Stomach (tissue), 19 donors: ENCODE measurements at regions of chr12 and their contacts with region 1.

Region 1: GRCh38 chr12:94841177-94841576 is 162.3 kb downstream of the NDUFA12 start:
- DNase-seq: peak in 1 of 2 donors; percentile 48
- H3K4me3 ChIP-seq: no peak overlapping the region
- H3K27ac ChIP-seq: no peak overlapping the region
- H3K4me1 ChIP-seq: no peaks in the 10 kb centered on the region
- H3K27me3 ChIP-seq: no peaks in the 10 kb centered on the region
- CTCF ChIP-seq: no peak
- EP300 ChIP-seq: no peak
- POLR2A ChIP-seq: no peak

Region 2: GRCh38 chr12:94909663-94910062 is 68.5 kb after region 1 on chr12:
- intact Hi-C with region 1: loop called (anchors 10 kb)
- DNase-seq: peak in 1 of 2 donors; percentile 33
- H3K4me3 ChIP-seq: no peak overlapping the region
- H3K27ac ChIP-seq: no peak overlapping the region
- H3K4me1 ChIP-seq: no peaks in the 10 kb centered on the region
- H3K27me3 ChIP-seq: no peaks in the 10 kb centered on the region
- CTCF ChIP-seq: no peak
- EP300 ChIP-seq: no peak
- POLR2A ChIP-seq: no peak

Region 3: DNA sequence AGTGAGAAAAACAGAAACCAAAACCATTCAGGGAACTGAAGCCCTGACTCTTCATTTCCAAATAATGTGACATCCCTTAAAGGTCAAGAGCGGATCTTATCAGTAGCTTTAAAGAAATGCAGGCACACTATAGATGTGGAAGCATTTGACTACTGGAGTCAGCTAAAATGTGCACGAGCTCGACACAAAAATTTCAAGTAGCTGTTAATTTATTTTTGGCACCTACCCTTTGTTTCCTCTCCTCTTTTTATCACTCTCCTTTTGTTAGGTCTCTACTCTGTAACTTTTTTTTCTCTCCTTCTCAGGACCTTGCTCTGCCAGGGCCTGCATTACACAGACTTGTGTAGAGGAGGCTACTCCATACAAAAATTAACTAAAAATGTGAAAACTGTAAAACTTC is 317.7 kb after region 1 on chr12:
- intact Hi-C with region 1: no loop called
- DNase-seq: no peak
- H3K4me3 ChIP-seq: no peak overlapping the region
- H3K27ac ChIP-seq: no peak overlapping the region
- H3K4me1 ChIP-seq: peaks cover 0 to 14% (median 6%) of the 10 kb centered on the region in 4 donors
- H3K27me3 ChIP-seq: no peaks in the 10 kb centered on the region
- CTCF ChIP-seq: no peak
- EP300 ChIP-seq: no peak
- POLR2A ChIP-seq: no peak